ENCODE measurements at regions of chrX and their contacts with region 1.

Region 1: DNA sequence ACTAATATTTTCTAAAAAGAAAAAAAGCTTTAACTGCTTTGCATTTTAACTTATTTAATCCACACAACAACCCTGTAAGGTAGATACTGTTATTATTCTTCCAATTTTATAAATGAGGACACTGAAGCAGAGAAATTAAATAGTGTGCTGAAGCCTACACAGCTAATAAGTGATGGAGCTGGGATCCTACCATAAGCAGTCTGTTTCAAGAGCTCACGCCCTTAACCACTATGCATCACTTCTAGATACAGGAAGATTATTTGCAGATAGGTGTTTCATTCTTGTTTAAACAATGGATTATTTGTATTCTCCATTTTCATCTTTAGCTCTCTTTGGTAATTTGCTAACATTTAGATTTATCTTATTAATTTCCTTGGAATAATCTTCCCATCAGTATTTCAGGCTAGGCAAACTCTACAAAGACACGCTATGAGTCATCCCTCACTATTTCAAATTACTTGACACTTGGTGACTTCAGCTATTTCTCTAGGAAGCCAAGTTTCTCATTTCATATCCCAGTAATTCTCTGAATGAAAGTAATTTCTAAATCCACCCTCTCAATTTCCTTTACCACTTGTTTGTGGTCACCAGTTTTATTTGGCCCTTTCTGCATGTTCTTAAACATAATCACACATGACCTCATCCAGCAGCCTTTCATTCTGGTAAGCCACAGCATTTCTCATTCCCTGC is 67.3 kb downstream of the ASB9 start:
- DNase-seq: no peak
- H3K4me3 Mint-ChIP-seq: no peak overlapping the region
- H3K27ac Mint-ChIP-seq: no peak overlapping the region
- H3K4me1 Mint-ChIP-seq: peaks cover 37% of the 10 kb centered on the region
- H3K27me3 Mint-ChIP-seq: no peaks in the 10 kb centered on the region

Region 2: DNA sequence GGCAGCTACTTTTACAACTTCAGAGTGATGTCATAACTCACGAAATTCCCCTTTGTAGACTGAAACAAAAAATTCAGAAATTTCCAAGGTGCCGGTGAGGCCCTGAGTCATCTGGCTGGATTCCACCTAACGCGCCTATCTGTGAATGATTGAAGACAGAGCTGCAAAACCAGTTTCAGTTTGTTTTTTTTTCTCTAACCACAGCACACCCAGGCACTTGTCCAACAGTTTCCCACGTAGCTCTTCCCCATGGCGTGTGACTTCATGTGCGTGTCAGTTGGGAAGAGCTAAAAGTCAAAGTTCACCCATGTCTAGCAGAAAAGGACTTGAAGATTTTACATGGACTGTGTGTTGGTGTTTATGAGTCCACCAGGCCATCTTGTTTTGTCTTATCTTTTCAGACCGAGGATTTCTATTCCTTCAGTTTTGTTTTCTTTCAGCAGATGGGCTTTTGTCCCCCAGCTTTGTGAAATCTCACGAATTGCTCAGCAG is 1533.3 kb before region 1 on chrX:
- CTCF ChIA-PET with region 1: no interaction called
- intact Hi-C with region 1: loop called (anchors 5 kb)
- DNase-seq: peak; percentile 82
- H3K4me3 Mint-ChIP-seq: peak overlapping the region; percentile 69
- H3K27ac Mint-ChIP-seq: peak overlapping the region; percentile 92
- H3K4me1 Mint-ChIP-seq: peaks cover 14% of the 10 kb centered on the region
- H3K27me3 Mint-ChIP-seq: no peaks in the 10 kb centered on the region

Region 3: DNA sequence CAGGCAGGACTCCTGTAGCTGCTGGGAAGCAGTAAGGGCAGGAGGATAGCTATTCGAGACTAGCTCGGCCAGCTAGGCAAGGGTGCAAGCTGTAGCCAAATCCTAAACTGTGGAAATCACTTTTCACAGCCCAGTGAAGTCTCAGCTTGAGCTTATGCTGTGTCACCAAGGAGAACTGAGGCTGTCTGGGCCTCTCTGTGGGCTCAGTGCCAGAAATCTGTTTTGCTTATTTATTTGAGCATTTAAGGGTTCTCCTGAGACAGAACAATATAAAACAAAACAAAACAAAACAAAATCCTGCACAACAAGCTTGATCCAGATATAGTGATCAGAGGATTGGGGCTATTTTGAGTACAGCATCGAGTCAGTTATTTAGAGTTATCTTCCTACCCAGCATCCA is 427.2 kb before region 1 on chrX:
- CTCF ChIA-PET with region 1: no interaction called
- intact Hi-C with region 1: no loop called
- DNase-seq: no peak
- H3K4me3 Mint-ChIP-seq: no peak overlapping the region
- H3K27ac Mint-ChIP-seq: no peak overlapping the region
- H3K4me1 Mint-ChIP-seq: peaks cover 2% of the 10 kb centered on the region
- H3K27me3 Mint-ChIP-seq: peaks cover 2% of the 10 kb centered on the region

Region 4: DNA sequence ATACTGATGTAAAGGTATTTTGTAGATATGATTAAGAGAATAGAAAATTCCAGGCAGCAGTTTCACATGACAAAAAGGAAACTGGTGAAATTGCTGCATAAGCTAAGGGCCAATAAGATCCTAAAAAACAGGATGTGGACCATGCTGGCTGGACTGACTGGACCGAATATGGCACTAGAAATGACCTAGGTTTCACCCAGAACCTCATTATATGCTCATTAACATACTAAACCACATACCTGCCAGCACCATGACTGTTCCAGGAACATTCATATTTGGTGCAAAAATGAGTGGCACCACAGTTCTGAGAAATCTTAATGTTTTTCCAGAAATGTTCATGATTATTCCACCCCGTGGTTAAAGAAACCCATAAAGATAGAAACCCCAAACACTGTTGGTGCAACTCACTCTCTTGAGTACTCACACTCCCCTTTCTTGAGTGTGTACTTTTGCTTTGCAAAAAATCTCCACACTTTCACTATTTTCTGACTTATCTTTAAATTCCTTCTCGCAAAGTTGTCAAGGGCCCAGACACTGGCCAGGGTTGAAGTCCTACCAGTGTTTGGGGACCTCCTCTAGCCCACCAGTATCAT is 403.7 kb before region 1 on chrX:
- CTCF ChIA-PET with region 1: no interaction called
- intact Hi-C with region 1: loop called (anchors 5 kb)
- DNase-seq: peak; percentile 7
- H3K4me3 Mint-ChIP-seq: no peak overlapping the region
- H3K27ac Mint-ChIP-seq: peak overlapping the region; percentile 76
- H3K4me1 Mint-ChIP-seq: peaks cover 13% of the 10 kb centered on the region
- H3K27me3 Mint-ChIP-seq: no peaks in the 10 kb centered on the region

Region 5: GRCh38 chrX:15151267-15152186 is 51.1 kb before region 1 on chrX:
- CTCF ChIA-PET with region 1: interaction called, 3 read pairs
- intact Hi-C with region 1: loop called (anchors 1 kb)
- DNase-seq: peak; percentile 53
- H3K4me3 Mint-ChIP-seq: peak overlapping the region; percentile 32
- H3K27ac Mint-ChIP-seq: peak overlapping the region; percentile 69
- H3K4me1 Mint-ChIP-seq: peaks cover 28% of the 10 kb centered on the region
- H3K27me3 Mint-ChIP-seq: no peaks in the 10 kb centered on the region

Region 6: DNA sequence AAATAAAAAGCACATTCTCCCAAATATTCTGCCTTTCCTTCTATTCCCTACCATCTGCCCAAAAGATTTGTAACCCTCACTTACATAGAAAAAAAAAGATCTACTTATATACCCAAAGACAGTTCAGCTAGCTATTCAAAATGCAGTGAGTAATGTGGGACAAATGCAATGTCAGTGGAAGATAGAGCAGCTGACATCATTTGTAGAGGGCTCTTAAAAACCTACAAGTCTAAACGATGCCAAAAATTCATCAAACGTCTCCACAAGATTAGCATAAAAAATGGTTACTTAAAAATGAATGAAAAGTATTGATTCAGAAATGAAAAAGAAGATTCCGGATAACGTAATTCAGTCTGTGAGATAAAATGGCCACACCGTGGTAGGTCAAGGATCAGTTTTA is 29.2 kb before region 1 on chrX:
- CTCF ChIA-PET with region 1: no interaction called
- intact Hi-C with region 1: no loop called
- DNase-seq: no peak
- H3K4me3 Mint-ChIP-seq: no peak overlapping the region
- H3K27ac Mint-ChIP-seq: no peak overlapping the region
- H3K4me1 Mint-ChIP-seq: peaks cover 10% of the 10 kb centered on the region
- H3K27me3 Mint-ChIP-seq: no peaks in the 10 kb centered on the region

Region 7: GRCh38 chrX:15301924-15302323 is 99.3 kb after region 1 on chrX:
- CTCF ChIA-PET with region 1: no interaction called
- intact Hi-C with region 1: no loop called
- DNase-seq: peak; percentile 23
- H3K4me3 Mint-ChIP-seq: no peak overlapping the region
- H3K27ac Mint-ChIP-seq: no peak overlapping the region
- H3K4me1 Mint-ChIP-seq: no peaks in the 10 kb centered on the region
- H3K27me3 Mint-ChIP-seq: no peaks in the 10 kb centered on the region